IMR-90 (cell line): ENCODE measurements at regions of chr10 and their contacts with region 1.

Region 1: DNA sequence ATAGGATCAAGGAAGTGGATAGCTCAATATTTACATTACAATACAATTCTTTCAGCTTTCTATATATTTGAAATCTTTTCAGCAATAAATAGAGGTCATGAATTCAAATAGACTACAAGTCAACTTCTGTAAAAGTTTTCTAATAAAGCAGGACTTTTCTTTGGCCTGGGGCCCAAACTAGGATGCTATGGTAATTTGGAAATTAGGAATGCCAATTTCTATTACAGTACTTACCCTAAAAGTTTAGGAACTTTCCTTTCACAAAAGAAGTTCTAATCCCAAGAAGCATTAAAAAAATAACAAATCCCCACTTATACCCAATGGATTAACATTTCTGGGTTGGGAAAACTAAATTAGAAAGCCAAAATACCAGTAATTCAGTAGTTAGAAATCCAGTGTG is 40.5 kb downstream of the SLC39A12 start:
- DNase-seq: no peak
- ATAC-seq: no peak
- H3K4me3 ChIP-seq: no peak overlapping the region
- H3K27ac ChIP-seq: no peak overlapping the region
- H3K4me1 ChIP-seq: peaks cover 2% of the 10 kb centered on the region; the same call in 1 of the 2 replicates
- H3K27me3 ChIP-seq: no peaks in the 10 kb centered on the region
- CTCF ChIP-seq: no peak
- POLR2A ChIP-seq: no peak
- RAD21 ChIP-seq: no peak

Region 2: GRCh38 chr10:18008986-18009385 is 16.7 kb after region 1 on chr10:
- CTCF ChIA-PET with region 1: no interaction called
- POLR2A ChIA-PET with region 1: interaction called, 11 read pairs
- dilution Hi-C with region 1: no loop called
- in situ Hi-C with region 1: no loop called
- intact Hi-C with region 1: no loop called
- DNase-seq: no peak
- ATAC-seq: no peak
- H3K4me3 ChIP-seq: no peak overlapping the region
- H3K27ac ChIP-seq: no peak overlapping the region
- H3K4me1 ChIP-seq: peaks cover 2% of the 10 kb centered on the region
- H3K27me3 ChIP-seq: no peaks in the 10 kb centered on the region; the same call in 1 of the 2 replicates
- CTCF ChIP-seq: no peak
- POLR2A ChIP-seq: no peak
- RAD21 ChIP-seq: no peak